SK-N-SH (cell line): ENCODE measurements at regions of chr12 and their contacts with region 1.

Region 1: DNA sequence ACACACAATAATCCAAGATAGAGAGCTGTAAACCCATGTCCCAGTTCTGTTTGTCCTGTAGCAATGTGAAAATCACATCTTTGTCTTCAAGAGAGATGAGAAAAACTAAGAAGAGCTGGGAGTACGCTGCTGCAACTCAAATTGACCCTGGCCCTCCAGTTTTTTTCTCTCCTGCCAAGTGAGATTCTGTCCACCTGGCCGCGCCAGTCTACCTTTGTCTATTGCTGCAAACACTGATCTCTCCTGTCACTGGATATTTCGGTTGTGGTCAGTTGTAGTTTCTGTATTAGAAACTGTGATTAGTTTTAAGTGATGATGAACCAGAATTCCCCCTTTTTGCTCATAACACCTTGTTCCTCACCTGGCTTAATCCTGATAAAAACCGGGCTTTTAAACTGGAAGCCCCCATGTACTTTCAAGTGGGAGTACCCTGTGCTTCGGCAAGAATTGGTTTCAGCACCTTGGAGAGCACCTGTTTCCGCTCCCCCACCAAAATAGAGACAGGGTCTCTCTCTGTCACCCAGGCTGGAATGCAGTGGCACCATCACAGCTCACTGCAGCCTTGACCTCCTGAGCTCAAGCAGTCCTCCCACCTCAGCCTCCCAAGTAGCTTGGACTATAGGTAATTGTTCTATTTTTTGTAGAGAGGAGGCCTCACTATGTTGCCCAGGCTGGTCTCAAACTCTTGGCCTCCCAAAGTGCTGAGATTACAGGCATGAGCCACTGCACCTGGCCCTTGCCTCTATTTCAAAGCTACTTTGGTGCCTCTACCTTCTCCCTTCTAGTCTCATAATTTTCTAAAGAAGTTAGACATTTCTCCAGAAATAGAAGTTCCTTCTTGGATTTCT is 156.8 kb downstream of the PHETA1 start:
- DNase-seq: no peak
- H3K4me3 ChIP-seq: no peak overlapping the region
- H3K27ac ChIP-seq: peak overlapping the region in 1 of 2 experiments; percentile 99; a peak in 2 of 4 replicates
- H3K4me1 ChIP-seq: peaks cover 0 to 62% of the 10 kb centered on the region in 2 experiments; a peak in 2 of 4 replicates
- H3K27me3 ChIP-seq: no peaks in the 10 kb centered on the region
- CTCF ChIP-seq: no peak
- EP300 ChIP-seq: no peak
- RAD21 ChIP-seq: no peak

Region 2: DNA sequence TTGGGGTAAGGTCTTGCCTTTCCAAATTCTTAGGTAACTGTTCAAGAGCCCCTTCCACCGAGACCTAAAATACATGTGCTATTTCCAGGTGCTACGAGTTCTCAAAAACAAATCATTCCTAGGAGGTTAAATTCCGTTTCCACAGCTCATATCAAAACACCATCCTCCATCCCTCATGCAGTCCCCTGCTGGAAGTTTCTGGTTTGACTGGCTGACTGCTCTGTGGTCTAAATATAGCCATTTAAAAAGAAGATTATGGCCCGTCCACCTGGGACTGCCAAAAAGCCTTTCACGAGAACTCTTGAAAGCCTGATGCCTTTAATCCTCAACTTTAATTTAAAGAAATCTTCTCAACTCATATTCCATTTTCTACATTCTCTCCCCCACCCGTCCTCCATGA is 90.3 kb before region 1 on chr12:
- CTCF ChIA-PET with region 1: no interaction called
- POLR2A ChIA-PET with region 1: no interaction called
- DNase-seq: no peak
- H3K4me3 ChIP-seq: no peak overlapping the region
- H3K27ac ChIP-seq: no peak overlapping the region
- H3K4me1 ChIP-seq: peaks cover 0 to 10% of the 10 kb centered on the region in 2 experiments; a peak in 2 of 4 replicates
- H3K27me3 ChIP-seq: no peaks in the 10 kb centered on the region
- CTCF ChIP-seq: no peak; the same call in 1 of the 2 replicates
- EP300 ChIP-seq: no peak
- RAD21 ChIP-seq: no peak

Region 3: DNA sequence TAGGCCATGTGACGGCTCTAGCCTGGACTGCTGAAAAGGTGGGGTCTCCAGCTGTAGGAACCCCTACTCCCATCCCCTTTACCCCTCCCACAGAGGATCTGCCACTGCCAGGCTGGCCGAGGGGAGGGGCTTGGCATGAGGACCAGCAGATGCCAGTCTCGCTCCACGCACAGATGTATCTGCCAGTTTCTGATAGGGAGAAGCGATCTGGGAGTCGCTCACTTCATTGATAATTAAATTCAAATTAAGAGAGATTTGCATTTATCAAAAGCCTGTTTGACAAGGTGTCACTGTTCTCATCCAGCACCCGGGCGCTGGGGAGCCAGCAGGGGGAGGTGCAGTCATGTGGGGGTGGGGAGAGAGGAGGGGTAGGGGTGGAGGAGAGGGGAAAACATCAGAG is 74.1 kb before region 1 on chr12:
- CTCF ChIA-PET with region 1: no interaction called
- POLR2A ChIA-PET with region 1: no interaction called
- DNase-seq: peak; percentile 67
- H3K4me3 ChIP-seq: no peak overlapping the region
- H3K27ac ChIP-seq: no peak overlapping the region
- H3K4me1 ChIP-seq: peaks cover 0 to 8% of the 10 kb centered on the region in 2 experiments; a peak in 1 of 4 replicates
- H3K27me3 ChIP-seq: no peaks in the 10 kb centered on the region
- CTCF ChIP-seq: 0 out of 2 replicates have a peak, but pooled peaks have one; percentile 8
- EP300 ChIP-seq: no peak
- RAD21 ChIP-seq: peak; percentile 77

Region 4: GRCh38 chr12:111181143-111181726 is 30.9 kb before region 1 on chr12:
- CTCF ChIA-PET with region 1: interaction called, 11 read pairs
- POLR2A ChIA-PET with region 1: interaction called, 6 read pairs
- DNase-seq: peak; percentile 83
- H3K4me3 ChIP-seq: no peak overlapping the region; a peak in 1 of 4 replicates
- H3K27ac ChIP-seq: peak overlapping the region in 1 of 2 experiments; percentile 99; a peak in 2 of 4 replicates
- H3K4me1 ChIP-seq: peaks cover 4 to 83% of the 10 kb centered on the region in 2 experiments; a peak in 3 of 4 replicates
- H3K27me3 ChIP-seq: peaks cover 9% of the 10 kb centered on the region; the same call in 1 of the 2 replicates
- CTCF ChIP-seq: no peak
- EP300 ChIP-seq: peak in 1 of 2 experiments; percentile 88; a peak in 2 of 4 replicates
- RAD21 ChIP-seq: peak; percentile 38